ENCODE measurements at regions of chr3 and their contacts with region 1.

Region 1: DNA sequence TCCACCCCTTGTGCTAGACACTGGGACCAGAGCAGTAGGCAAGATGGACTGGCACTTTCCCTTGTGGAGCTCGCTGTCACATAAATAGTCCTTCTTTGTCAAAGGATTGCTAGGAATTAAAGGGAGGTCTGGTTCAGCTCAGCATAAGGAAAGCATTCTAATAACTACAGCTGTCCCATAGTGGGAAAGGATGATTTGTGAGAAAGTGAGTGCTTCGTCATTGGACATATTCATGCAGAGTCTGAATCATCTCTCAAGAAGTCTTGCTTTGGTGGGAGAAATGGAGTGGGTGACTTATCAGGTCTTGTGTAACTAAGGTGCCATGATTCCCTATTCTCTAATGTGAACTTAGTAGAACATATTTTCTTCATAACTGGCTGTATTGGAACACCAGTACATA is 14.7 kb downstream of the PPARG start:
- H3K4me3 Mint-ChIP-seq: no peak overlapping the region
- H3K27ac Mint-ChIP-seq: peak overlapping the region; percentile 70
- H3K4me1 Mint-ChIP-seq: peaks cover 51% of the 10 kb centered on the region
- H3K27me3 Mint-ChIP-seq: no peaks in the 10 kb centered on the region

Region 2: DNA sequence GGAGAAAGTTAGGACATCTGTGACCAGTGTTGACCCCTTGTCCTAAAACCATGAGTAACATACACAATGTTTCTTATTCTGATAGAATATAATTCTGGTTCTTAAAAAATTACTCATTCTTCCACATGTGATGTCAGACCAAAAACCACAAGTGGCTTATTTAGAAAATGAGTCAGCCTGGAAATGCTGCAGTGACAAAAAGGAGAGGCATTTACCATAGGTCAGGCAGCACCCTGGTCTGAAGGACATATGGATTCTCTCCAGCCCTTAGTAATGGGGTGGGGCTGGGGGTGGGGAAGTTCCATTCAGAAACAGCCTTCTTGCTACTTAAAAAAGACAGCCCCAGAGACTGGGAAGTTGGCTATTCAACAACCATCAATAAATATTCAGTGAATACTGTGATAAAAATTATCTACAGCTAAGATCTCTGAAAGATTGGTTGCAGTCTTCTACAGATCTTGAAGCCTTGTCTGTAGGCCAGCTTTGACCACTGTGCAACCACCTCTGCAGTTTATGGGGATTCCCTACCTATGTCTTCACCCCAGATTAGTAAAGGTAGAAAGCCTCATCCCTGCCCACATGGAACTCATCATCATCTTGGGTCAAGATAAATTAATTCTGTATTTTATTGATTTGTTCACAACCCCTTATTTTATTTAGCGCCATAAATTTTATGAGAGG is 109.9 kb before region 1 on chr3:
- intact Hi-C with region 1: loop called (anchors 5 kb)
- H3K4me3 Mint-ChIP-seq: no peak overlapping the region
- H3K27ac Mint-ChIP-seq: peak overlapping the region; percentile 95
- H3K4me1 Mint-ChIP-seq: peaks cover 72% of the 10 kb centered on the region
- H3K27me3 Mint-ChIP-seq: peaks cover 2% of the 10 kb centered on the region

Region 3: GRCh38 chr3:12239310-12239709 is 64.2 kb before region 1 on chr3:
- intact Hi-C with region 1: no loop called
- H3K4me3 Mint-ChIP-seq: no peak overlapping the region
- H3K27ac Mint-ChIP-seq: no peak overlapping the region
- H3K4me1 Mint-ChIP-seq: peaks cover 17% of the 10 kb centered on the region
- H3K27me3 Mint-ChIP-seq: peaks cover 31% of the 10 kb centered on the region

Region 4: GRCh38 chr3:12393894-12394293 is 90.4 kb after region 1 on chr3:
- intact Hi-C with region 1: no loop called
- H3K4me3 Mint-ChIP-seq: no peak overlapping the region
- H3K27ac Mint-ChIP-seq: no peak overlapping the region
- H3K4me1 Mint-ChIP-seq: peaks cover 25% of the 10 kb centered on the region
- H3K27me3 Mint-ChIP-seq: no peaks in the 10 kb centered on the region

Region 5: DNA sequence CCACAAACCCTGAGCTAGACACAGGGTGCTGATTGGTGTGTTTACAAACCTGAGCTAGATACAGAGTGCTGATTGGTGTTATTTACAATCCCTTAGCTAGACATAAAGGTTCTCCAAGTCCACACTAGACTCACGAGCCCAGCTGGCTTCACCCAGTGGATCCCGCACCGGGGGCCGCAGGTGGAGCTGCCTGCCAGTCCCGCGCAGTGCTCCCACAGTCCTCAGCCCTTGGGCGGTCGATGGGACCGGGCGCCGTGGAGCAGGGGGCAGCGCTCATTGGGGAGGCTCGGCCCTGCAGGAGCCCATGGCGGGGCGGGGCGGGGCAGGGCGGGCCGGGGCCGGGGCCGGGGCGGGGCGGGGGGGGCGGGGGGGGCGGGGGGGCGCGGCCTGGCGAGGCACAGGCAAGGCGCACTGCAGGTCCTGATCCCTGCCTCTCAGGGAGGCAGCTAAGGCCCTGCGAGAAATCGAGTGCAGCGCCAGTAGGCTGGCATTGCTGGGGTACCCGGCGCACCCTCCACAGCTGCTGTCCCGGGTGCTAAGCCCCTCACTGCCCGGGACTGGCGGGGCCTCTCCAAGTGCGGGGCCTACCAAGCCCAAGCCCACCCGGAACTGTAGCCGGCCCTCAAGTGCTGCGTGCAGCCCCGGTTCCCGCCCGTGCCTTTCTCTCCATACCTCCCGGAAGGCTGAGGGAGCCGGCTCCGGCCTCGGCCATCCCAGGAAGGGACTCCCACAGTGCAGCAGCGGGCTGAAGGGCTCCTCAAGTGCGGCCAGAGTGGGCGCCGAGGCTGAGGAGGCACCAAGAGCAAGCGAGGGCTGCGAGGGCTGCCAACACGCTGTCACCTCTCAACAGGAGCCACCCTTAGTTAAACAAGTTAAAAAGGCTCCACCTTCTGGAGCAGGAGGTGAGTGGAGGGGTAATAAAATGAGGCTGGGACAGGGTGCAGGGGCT is 465.3 kb after region 1 on chr3:
- intact Hi-C with region 1: no loop called
- H3K4me3 Mint-ChIP-seq: no peak overlapping the region
- H3K27ac Mint-ChIP-seq: no peak overlapping the region
- H3K4me1 Mint-ChIP-seq: peaks cover 7% of the 10 kb centered on the region
- H3K27me3 Mint-ChIP-seq: peaks cover 4% of the 10 kb centered on the region

Measured in dendritic cell treated with granulocyte-macrophage colony-stimulating factor and Interleukin-4, amounts not matched to agents 40 ng/mL and 50 ng/mL, for 4 days (primary cell).